Activated T-helper 1 cell treated with anti-CD3 and anti-CD28 coated beads, Interleukin-12 subunit alpha, Interleukin-12 subunit beta, Interleukin-2, Interleukin-4 antibody, amounts not matched to agents 30 ng/mL and 10 ng/mL and 1 ng/mL, durations not matched to agents 14 hours and 24 hours and 36 hours (primary cell): ENCODE measurements at regions of chr19 and their contacts with region 1.

Region 1: GRCh38 chr19:47273313-47273977 is 1.2 kb upstream of the INAFM1 start:
- DNase-seq: peak; percentile 90
- H3K4me3 Mint-ChIP-seq: peak overlapping the region; percentile 92
- H3K27ac Mint-ChIP-seq: peak overlapping the region; percentile 98
- H3K4me1 Mint-ChIP-seq: peaks cover 29% of the 10 kb centered on the region
- H3K27me3 Mint-ChIP-seq: no peaks in the 10 kb centered on the region

Region 2: GRCh38 chr19:46634045-46634655 is 639.3 kb before region 1 on chr19:
- intact Hi-C with region 1: loop called (anchors 1 kb)
- DNase-seq: peak; percentile 94
- H3K4me3 Mint-ChIP-seq: peak overlapping the region; percentile 85
- H3K27ac Mint-ChIP-seq: peak overlapping the region; percentile 75
- H3K4me1 Mint-ChIP-seq: peaks cover 11% of the 10 kb centered on the region
- H3K27me3 Mint-ChIP-seq: peaks cover 2% of the 10 kb centered on the region

Region 3: GRCh38 chr19:47112997-47113849 is 160.2 kb before region 1 on chr19 and contains the start of gene ZC3H4:
- intact Hi-C with region 1: loop called (anchors 1 kb)
- DNase-seq: peak; percentile 100
- H3K4me3 Mint-ChIP-seq: peak within 1 kb of the TSS; percentile 92
- H3K27ac Mint-ChIP-seq: peak within 1 kb of the TSS; percentile 99
- H3K4me1 Mint-ChIP-seq: peaks cover 33% of the 10 kb centered on the region
- H3K27me3 Mint-ChIP-seq: no peaks in the 10 kb centered on the region
- total RNA-seq, gene ZC3H4: 111 and 114 TPM in 2 replicates

Region 4: GRCh38 chr19:47190167-47190727 is 83.2 kb before region 1 on chr19:
- intact Hi-C with region 1: no loop called
- DNase-seq: peak; percentile 27
- H3K4me3 Mint-ChIP-seq: peak overlapping the region; percentile 52
- H3K27ac Mint-ChIP-seq: peak overlapping the region; percentile 93
- H3K4me1 Mint-ChIP-seq: peaks cover 56% of the 10 kb centered on the region
- H3K27me3 Mint-ChIP-seq: no peaks in the 10 kb centered on the region

Region 5: GRCh38 chr19:47243776-47244547 is 29.5 kb before region 1 on chr19:
- intact Hi-C with region 1: loop called (anchors 1 kb)
- DNase-seq: peak; percentile 90
- H3K4me3 Mint-ChIP-seq: peak overlapping the region; percentile 80
- H3K27ac Mint-ChIP-seq: peak overlapping the region; percentile 93
- H3K4me1 Mint-ChIP-seq: peaks cover 14% of the 10 kb centered on the region
- H3K27me3 Mint-ChIP-seq: peaks cover 7% of the 10 kb centered on the region

Region 6: GRCh38 chr19:47284324-47284899 is 11.0 kb after region 1 on chr19:
- intact Hi-C with region 1: no loop called
- DNase-seq: peak; percentile 30
- H3K4me3 Mint-ChIP-seq: no peak overlapping the region
- H3K27ac Mint-ChIP-seq: no peak overlapping the region
- H3K4me1 Mint-ChIP-seq: peaks cover 13% of the 10 kb centered on the region
- H3K27me3 Mint-ChIP-seq: no peaks in the 10 kb centered on the region

Region 7: DNA sequence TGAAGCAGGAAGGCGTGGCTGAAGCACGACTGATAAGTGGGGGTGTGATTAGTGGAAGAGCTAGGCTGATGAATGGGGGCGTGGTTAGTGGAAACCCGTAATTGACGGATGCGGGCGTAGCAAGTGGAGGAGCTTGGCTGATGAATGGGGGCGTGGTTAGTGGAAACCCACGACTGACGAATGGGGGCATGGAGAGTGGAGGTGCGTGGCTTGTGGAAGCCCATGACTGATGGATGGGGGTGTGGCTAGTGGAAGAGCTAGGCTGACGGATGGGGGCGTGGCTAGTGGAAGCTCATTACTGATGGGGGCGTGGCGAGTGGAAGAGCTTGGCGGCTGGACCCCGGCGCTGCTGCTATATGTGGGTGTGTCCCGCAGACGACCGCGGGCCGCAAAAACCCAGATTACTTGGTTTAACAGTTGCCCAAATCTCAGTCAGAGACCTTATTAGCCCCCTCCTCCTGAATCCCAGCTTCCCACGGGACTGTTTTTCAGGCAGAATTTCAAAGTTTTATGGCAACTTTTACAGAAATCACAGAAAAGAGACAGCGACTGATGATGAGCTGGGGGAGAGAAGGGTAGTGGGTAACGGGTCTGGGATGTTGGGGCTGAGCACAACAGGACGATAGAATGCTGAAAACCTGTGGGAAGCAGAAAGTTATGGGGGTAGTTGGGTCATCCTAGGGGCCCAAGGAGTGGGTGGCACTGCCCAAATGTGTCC is 154.9 kb after region 1 on chr19:
- intact Hi-C with region 1: loop called (anchors 1 kb)
- DNase-seq: peak; percentile 78
- H3K4me3 Mint-ChIP-seq: no peak overlapping the region
- H3K27ac Mint-ChIP-seq: no peak overlapping the region
- H3K4me1 Mint-ChIP-seq: peaks cover 22% of the 10 kb centered on the region
- H3K27me3 Mint-ChIP-seq: peaks cover 30% of the 10 kb centered on the region

Region 8: DNA sequence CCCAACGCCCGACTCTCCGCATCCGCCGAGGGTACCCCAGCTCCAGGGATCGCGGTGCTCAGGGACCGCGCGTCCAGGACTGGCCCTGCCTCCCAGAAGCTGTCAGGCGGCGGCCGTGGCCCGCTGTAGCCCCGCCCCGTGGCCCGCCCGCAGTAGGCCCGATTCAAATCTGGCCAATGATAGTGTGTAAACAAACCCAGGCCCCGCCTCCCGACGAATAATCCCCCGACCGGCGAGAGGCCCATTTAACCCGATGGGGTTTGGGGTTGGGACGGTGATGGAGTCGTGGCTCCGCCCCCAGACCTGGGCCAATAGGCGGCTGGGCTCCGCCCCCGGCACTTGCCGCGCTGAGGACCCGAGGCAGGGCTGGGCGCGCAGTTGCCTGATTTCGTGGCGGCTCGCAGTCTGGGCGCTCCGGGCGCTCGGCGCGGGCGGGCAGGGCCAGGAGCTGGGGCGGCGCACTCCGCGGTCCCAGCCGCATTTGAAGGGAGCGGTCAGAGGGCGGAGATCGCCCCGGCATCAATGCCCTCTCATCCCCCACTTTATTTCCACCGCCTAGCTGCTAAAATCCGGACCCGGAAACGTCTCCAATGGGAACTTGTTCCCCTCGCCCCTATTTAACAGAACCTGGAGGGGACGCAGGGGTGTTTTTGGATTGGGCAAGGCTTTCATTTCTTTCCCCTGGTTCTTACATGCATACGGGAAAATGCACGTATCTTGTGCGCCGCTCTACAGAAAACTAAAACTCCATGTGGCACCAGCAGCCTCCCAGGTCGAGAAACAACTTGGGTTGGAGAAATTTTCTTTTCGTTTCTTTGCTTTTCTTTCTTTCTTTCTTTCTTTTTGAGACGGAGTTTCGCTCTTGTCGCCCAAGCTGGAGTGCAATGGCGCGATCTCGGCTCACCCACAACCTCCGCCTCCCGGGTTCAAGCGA is 327.1 kb after region 1 on chr19:
- intact Hi-C with region 1: loop called (anchors 1 kb)
- DNase-seq: peak; percentile 98
- H3K4me3 Mint-ChIP-seq: peak overlapping the region; percentile 87
- H3K27ac Mint-ChIP-seq: peak overlapping the region; percentile 89
- H3K4me1 Mint-ChIP-seq: peaks cover 31% of the 10 kb centered on the region
- H3K27me3 Mint-ChIP-seq: peaks cover 1% of the 10 kb centered on the region